PC-3 (cell line): ENCODE measurements at regions of chr18 and their contacts with region 1.

Region 1: GRCh38 chr18:58671111-58671631 is at the start of gene MALT1:
- DNase-seq: peak; percentile 90
- ATAC-seq: peak; percentile 59
- H3K4me3 ChIP-seq: peak within 1 kb of the TSS; percentile 92
- H3K27ac ChIP-seq: peak within 1 kb of the TSS; percentile 87
- H3K4me1 ChIP-seq: peaks cover 64% of the 10 kb centered on the region
- H3K27me3 ChIP-seq: no peaks in the 10 kb centered on the region
- CTCF ChIP-seq: no peak
- total RNA-seq, gene MALT1: 24.2 and 26.3 TPM in 2 replicates

Region 2: GRCh38 chr18:58458304-58458703 is 212.9 kb before region 1 on chr18:
- CTCF ChIA-PET with region 1: no interaction called
- POLR2A ChIA-PET with region 1: interaction called, 18 read pairs
- intact Hi-C with region 1: no loop called
- DNase-seq: no peak
- ATAC-seq: no peak
- H3K4me3 ChIP-seq: no peak overlapping the region
- H3K27ac ChIP-seq: no peak overlapping the region
- H3K4me1 ChIP-seq: peaks cover 16% of the 10 kb centered on the region
- H3K27me3 ChIP-seq: no peaks in the 10 kb centered on the region
- CTCF ChIP-seq: no peak

Region 3: DNA sequence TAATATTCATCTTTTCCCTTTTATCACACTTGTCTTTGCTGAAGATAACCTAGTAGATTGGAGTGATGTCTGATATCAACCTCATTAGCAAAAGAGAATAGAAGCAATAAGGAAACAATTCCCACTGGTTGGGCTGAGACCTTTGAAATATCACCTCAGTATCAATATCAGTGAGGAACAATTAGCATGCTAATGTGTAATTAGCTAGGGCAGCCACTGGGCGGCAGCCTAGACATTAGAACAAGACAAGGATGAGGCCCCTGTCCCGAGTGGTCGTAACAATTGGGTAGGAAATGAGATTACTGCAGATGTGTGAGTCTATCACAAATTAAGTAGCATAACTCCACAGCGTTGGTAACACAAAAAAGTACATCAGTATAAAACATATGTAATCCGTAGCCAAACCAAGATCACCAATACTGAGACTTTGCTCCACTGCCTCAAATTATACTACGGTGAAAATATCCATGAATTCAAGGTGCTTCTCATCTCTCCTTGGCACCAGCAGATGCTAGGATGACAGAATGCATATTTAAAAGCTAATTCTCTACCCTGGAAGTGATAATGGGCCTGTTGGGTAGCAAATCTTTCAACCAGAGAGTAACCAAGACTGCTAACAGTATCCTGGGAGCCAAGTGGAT is 141.3 kb before region 1 on chr18:
- CTCF ChIA-PET with region 1: interaction called, 3 read pairs
- POLR2A ChIA-PET with region 1: no interaction called
- intact Hi-C with region 1: loop called (anchors 5 kb)
- DNase-seq: peak; percentile 71
- ATAC-seq: peak; percentile 75
- H3K4me3 ChIP-seq: no peak overlapping the region
- H3K27ac ChIP-seq: no peak overlapping the region
- H3K4me1 ChIP-seq: no peaks in the 10 kb centered on the region
- H3K27me3 ChIP-seq: no peaks in the 10 kb centered on the region
- CTCF ChIP-seq: peak; percentile 97

Region 4: DNA sequence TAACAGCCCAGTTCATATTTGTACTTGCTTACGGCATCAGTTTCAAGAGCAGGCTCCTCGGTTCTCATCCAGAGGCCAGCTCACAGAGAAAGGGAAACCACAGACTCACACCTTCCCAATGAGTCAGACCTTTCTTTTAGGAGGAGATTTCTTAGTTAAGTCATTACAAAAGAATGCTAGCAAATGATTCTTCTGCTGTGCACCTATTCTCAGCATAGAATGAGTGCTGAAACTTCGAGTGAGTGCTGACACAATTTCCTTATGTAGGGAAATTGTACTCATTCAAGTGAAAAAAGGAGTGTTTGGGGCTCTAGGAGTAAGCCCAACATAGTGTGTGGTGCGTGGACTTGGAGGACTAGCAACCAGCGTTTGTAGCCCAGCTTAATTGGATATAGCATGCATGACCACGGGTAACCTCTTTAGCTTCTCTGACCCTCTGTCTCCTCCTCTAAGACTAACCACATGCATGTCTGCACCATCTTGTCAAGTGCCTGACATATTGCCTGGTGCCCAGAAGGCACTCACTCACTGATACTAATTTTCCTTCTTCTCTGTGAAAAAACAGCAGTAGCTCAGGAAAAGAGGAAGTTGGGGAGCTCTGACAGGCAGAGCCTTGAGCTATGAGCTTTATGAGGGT is 129.3 kb before region 1 on chr18:
- CTCF ChIA-PET with region 1: no interaction called
- POLR2A ChIA-PET with region 1: interaction called, 3 read pairs
- intact Hi-C with region 1: loop called (anchors 2 kb)
- DNase-seq: peak; percentile 94
- ATAC-seq: peak; percentile 92
- H3K4me3 ChIP-seq: no peak overlapping the region
- H3K27ac ChIP-seq: peak overlapping the region; percentile 68
- H3K4me1 ChIP-seq: peaks cover 36% of the 10 kb centered on the region
- H3K27me3 ChIP-seq: no peaks in the 10 kb centered on the region
- CTCF ChIP-seq: no peak

Region 5: DNA sequence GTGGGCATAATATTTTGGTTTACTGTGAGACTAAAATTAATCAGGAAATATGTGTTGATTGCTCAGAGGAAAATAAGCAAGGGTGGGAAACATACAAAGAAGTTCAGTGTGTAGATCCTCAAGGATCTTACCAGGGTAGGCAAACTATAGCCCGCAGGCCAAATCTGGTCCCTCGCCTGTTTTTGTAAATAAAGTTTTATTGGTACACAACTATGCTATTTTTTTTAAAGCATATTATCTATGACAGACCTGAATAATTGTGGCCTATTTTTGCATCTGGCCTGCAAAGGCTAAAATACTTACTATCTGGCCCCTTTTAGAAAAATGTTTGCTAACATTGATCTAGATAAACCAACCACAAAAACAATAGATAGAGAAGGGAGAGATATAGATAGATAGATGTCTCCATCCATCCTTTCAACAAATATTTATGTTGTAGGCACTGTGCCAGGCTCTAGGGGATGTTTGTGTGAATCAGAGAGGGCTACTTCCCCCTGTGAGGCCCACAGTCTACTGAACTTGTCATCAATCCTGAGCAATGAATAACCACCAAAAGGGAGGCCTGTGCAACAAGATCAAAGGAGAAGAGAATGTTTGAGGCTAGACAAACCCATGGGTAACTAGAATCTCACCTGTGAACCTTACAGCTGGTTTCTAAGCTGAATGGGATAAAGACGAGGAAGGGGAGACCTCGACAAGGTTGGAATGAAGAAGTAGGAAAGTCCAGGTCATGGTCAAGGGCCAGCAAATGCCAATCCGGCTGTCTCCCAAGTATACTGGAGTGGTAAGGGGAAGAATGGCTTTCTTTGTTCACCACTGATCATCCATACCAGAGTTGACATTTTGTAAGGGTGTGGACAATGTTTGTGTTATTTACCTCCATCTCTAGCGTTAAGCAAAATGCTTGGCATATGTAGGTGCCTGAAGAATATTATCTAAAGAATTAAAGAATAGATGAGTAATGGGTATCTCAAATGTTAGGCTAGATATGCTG is 65.8 kb before region 1 on chr18:
- CTCF ChIA-PET with region 1: no interaction called
- POLR2A ChIA-PET with region 1: no interaction called
- intact Hi-C with region 1: no loop called
- DNase-seq: peak; percentile 79
- ATAC-seq: peak; percentile 49
- H3K4me3 ChIP-seq: no peak overlapping the region
- H3K27ac ChIP-seq: no peak overlapping the region
- H3K4me1 ChIP-seq: peaks cover 15% of the 10 kb centered on the region
- H3K27me3 ChIP-seq: no peaks in the 10 kb centered on the region
- CTCF ChIP-seq: no peak

Region 6: DNA sequence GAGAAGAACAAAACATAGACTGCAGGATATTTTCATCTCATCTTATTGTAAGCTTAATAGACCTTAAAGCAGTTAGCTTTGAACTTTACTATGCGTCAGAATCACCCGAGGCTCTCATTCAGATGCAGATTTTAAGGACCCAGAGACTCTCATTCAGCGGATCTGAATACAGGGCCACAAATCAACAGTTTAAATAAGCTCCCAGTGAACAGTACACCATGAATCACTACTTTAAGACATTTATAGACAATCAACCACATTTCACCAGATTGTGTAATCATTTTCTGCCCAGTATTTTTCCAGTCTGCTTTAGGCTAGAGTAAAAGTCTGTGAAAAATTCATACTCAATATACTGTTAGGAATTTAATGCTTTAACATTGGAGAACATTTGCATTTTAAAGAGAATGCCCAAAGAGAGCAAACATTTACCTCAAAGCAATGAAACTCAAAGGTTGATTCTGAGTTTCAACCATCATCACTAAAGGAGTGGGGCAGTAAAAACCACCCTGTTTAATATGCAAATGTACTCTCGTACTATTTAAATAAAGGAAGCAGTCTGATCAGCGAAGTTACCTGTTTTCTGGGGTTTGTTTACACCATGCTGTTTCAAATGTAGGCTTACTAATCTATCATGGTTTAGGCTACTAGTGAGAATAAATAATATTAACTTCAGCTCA is 31.3 kb before region 1 on chr18:
- CTCF ChIA-PET with region 1: interaction called, 3 read pairs
- POLR2A ChIA-PET with region 1: interaction called, 8 read pairs
- intact Hi-C with region 1: loop called (anchors 1 kb)
- DNase-seq: peak; percentile 82
- ATAC-seq: peak; percentile 92
- H3K4me3 ChIP-seq: no peak overlapping the region
- H3K27ac ChIP-seq: peak overlapping the region; percentile 44
- H3K4me1 ChIP-seq: peaks cover 38% of the 10 kb centered on the region
- H3K27me3 ChIP-seq: no peaks in the 10 kb centered on the region
- CTCF ChIP-seq: no peak

Region 7: GRCh38 chr18:58998401-58999203 is 327.4 kb after region 1 on chr18:
- CTCF ChIA-PET with region 1: no interaction called
- POLR2A ChIA-PET with region 1: interaction called, 20 read pairs
- intact Hi-C with region 1: no loop called
- DNase-seq: peak; percentile 82
- ATAC-seq: peak; percentile 95
- H3K4me3 ChIP-seq: no peak overlapping the region
- H3K27ac ChIP-seq: peak overlapping the region; percentile 77
- H3K4me1 ChIP-seq: peaks cover 27% of the 10 kb centered on the region
- H3K27me3 ChIP-seq: no peaks in the 10 kb centered on the region
- CTCF ChIP-seq: no peak

Region 8: DNA sequence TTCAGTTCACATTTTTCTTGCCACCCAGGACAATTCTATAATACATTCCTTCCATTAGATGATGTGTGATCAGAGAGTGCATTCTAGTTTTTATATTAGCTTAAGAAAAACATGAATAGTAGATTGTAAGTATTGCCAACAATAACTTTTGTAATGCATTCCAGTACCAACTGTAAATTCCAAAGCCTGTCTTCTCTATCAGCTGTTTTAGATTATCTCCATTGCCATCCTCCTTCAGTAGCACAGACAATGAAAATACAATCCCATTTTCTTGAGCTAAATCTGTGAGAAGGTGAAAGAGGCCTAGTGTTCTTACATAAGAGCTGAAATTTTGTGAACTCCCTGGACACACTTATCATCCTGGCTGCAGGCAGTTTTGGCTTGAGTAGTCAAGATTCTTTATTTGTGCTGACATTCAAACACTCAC is 922.1 kb after region 1 on chr18:
- CTCF ChIA-PET with region 1: no interaction called
- POLR2A ChIA-PET with region 1: interaction called, 17 read pairs
- intact Hi-C with region 1: no loop called
- DNase-seq: no peak
- ATAC-seq: no peak
- H3K4me3 ChIP-seq: no peak overlapping the region
- H3K27ac ChIP-seq: no peak overlapping the region
- H3K4me1 ChIP-seq: no peaks in the 10 kb centered on the region
- H3K27me3 ChIP-seq: no peaks in the 10 kb centered on the region
- CTCF ChIP-seq: no peak